ENCODE measurements at regions of chr22 and their contacts with region 1.

Region 1: GRCh38 chr22:50562523-50563412 is at the start of gene SYCE3:
- DNase-seq: peak; percentile 92
- ATAC-seq: peak; percentile 95
- H3K4me3 ChIP-seq: peak within 1 kb of the TSS; percentile 68 to 85 (median 71)
- H3K27ac ChIP-seq: peak within 1 kb of the TSS; percentile 55
- H3K4me1 ChIP-seq: peaks cover 12% of the 10 kb centered on the region
- H3K27me3 ChIP-seq: peaks cover 0 to 22% of the 10 kb centered on the region in 2 experiments; a peak in 2 of 5 replicates
- CTCF ChIP-seq: peak; percentile 95
- EP300 ChIP-seq: no peak
- POLR2A ChIP-seq: peak; percentile 31 to 86; a peak in 2 of 4 replicates
- RAD21 ChIP-seq: peak; percentile 90
- total RNA-seq, gene SYCE3: not detected in 2 replicates

Region 2: GRCh38 chr22:50497093-50497492 is 65.7 kb before region 1 on chr22:
- CTCF ChIA-PET with region 1: no interaction called
- POLR2A ChIA-PET with region 1: no interaction called
- in situ Hi-C with region 1: no loop called
- intact Hi-C with region 1: no loop called
- DNase-seq: no peak
- ATAC-seq: no peak
- H3K4me3 ChIP-seq: no peak overlapping the region
- H3K27ac ChIP-seq: no peak overlapping the region
- H3K4me1 ChIP-seq: peaks cover 32% of the 10 kb centered on the region
- H3K27me3 ChIP-seq: no peaks in the 10 kb centered on the region
- CTCF ChIP-seq: no peak
- EP300 ChIP-seq: no peak
- POLR2A ChIP-seq: no peak
- RAD21 ChIP-seq: no peak

Region 3: DNA sequence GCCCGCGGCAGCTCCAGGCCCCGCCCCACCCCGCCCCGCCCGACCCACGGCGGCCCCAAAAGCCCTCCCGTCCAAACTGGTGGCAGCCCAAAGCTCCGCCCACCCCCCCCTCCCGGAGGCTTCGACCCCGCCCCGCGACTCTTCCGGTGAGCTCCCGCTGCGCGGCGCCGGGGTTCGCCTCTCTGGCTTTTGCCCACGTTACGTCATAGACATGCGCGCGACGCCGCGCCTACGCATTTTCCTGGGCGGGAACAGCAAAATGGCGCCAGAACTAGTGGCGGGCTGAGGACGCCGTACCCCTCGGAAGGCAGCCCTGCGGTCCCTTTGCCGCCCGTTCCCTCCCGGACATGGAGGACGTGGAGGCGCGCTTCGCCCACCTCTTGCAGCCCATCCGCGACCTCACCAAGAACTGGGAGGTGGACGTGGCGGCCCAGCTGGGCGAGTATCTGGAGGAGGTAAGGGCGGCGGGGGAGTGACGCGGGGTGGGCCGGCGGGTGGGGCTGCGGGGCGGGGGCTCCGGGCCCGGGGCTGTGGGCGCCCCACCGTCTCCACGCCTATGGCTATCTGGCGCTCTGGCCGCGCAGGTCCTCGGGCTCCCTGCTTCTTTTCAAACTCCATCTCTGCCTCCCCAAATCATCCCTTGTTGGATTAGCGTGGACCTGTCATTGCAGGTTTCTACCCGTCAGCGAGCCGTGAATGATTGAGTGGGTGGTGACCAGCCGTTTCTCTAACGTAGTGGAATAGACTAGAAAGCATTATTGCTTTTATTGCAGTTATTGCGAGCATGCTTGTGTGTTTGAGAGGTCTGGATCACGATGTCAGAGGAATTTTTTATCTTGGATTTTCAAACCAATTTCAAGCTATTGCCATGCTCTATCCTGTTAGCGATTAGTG is 54.5 kb before region 1 on chr22 and contains the start of gene NCAPH2:
- CTCF ChIA-PET with region 1: no interaction called
- POLR2A ChIA-PET with region 1: interaction called, 10 read pairs
- in situ Hi-C with region 1: no loop called
- intact Hi-C with region 1: no loop called
- DNase-seq: peak; percentile 89
- ATAC-seq: peak; percentile 42
- H3K4me3 ChIP-seq: peak within 1 kb of the TSS; percentile 90 to 99 (median 93)
- H3K27ac ChIP-seq: peak within 1 kb of the TSS; percentile 87
- H3K4me1 ChIP-seq: peaks cover 19% of the 10 kb centered on the region
- H3K27me3 ChIP-seq: no peaks in the 10 kb centered on the region; a peak in 1 of 5 replicates
- CTCF ChIP-seq: peak; percentile 50
- EP300 ChIP-seq: peak; percentile 42 to 53; a peak in 1 of 4 replicates
- POLR2A ChIP-seq: peak; percentile 81 to 87
- RAD21 ChIP-seq: no peak
- total RNA-seq, gene NCAPH2: 44.1 and 64.4 TPM in 2 replicates

Region 4: GRCh38 chr22:50518606-50519005 is 44.2 kb before region 1 on chr22:
- CTCF ChIA-PET with region 1: no interaction called
- POLR2A ChIA-PET with region 1: no interaction called
- in situ Hi-C with region 1: no loop called
- intact Hi-C with region 1: no loop called
- DNase-seq: no peak
- ATAC-seq: no peak
- H3K4me3 ChIP-seq: no peak overlapping the region
- H3K27ac ChIP-seq: no peak overlapping the region
- H3K4me1 ChIP-seq: peaks cover 3% of the 10 kb centered on the region
- H3K27me3 ChIP-seq: no peaks in the 10 kb centered on the region
- CTCF ChIP-seq: no peak
- EP300 ChIP-seq: no peak
- POLR2A ChIP-seq: no peak
- RAD21 ChIP-seq: no peak

Region 5: DNA sequence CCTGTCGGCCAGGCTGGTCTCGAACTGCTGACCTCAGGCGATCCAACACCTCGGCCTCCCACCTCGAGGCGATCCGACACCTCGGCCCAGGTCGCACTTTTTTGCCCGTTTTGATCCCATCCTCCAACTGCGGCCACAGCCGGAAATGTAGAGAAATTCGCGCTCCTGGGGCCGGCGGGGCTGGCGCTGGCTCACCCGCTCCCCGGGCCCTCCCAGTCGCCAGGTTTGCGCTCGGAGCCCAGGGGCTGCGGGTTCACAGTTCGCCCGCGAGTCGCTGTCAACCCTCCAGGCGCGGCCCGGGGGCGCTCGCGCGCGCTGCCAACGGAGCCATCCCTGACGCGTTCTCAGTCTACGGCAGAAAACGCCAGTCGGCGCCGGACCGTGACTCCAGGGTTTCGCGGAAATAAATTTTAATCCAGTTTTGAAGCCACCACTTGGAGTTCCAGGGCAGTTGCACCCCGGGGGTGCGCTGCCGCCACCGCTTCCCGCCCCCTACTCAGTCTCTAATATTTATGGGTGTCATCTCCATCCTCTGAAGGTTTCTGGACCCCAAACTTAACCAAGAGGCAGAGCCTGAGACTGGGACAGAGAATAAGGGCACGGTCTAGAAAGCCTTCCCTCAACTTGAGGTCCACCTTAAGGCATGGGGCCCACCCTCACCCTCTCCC is 18.6 kb before region 1 on chr22:
- CTCF ChIA-PET with region 1: no interaction called
- POLR2A ChIA-PET with region 1: interaction called, 12 read pairs
- in situ Hi-C with region 1: no loop called
- intact Hi-C with region 1: no loop called
- DNase-seq: no peak
- ATAC-seq: no peak
- H3K4me3 ChIP-seq: no peak overlapping the region
- H3K27ac ChIP-seq: no peak overlapping the region
- H3K4me1 ChIP-seq: peaks cover 35% of the 10 kb centered on the region
- H3K27me3 ChIP-seq: peaks cover 3 to 30% of the 10 kb centered on the region in 2 experiments
- CTCF ChIP-seq: no peak
- EP300 ChIP-seq: no peak
- POLR2A ChIP-seq: no peak
- RAD21 ChIP-seq: no peak

Measured in HepG2 (cell line).